Activated CD4-positive, alpha-beta memory T cell treated with anti-CD3 and anti-CD28 coated beads for 36 hours (primary cell): ENCODE measurements at regions of chr18 and their contacts with region 1.

Region 1: DNA sequence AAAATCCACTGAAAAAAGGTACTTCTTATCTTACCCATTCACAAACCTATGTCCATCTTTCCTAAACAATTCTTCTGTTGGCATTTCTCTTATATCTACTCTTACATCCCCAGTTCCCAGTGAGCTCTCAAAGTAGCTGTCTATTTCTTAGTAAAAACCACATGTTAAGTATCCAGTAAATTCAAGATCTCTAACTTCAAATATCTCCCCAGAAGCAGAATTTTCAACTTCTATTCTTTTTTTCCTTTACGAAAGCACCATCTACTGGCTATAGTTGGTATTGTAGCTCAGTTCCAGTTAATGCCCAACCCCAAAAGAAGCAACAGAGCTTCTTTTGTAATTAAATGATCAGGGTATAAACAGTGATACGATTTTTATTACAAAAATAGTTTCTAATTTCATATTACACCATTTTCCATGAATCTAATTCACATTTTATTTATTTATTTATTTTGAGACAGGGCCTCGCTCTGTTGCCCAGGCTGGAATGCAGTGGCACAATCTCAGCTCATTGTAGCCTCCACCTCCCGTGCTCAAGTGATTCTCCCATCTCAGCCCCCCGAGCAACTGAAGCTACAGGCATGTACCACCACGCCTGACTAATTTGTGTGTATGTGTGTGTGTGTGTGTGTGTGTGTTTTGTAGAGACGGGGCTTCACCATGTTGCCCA is 28.5 kb downstream of the HRH4 start:
- DNase-seq: no peak
- H3K4me3 Mint-ChIP-seq: no peak overlapping the region
- H3K27ac Mint-ChIP-seq: no peak overlapping the region
- H3K4me1 Mint-ChIP-seq: peaks cover 18% of the 10 kb centered on the region
- H3K27me3 Mint-ChIP-seq: peaks cover 13% of the 10 kb centered on the region

Region 2: GRCh38 chr18:24208270-24209035 is 280.5 kb before region 1 on chr18:
- CTCF ChIA-PET with region 1: no interaction called
- POLR2A ChIA-PET with region 1: no interaction called
- intact Hi-C with region 1: no loop called
- DNase-seq: no peak
- H3K4me3 Mint-ChIP-seq: no peak overlapping the region
- H3K27ac Mint-ChIP-seq: no peak overlapping the region
- H3K4me1 Mint-ChIP-seq: peaks cover 5% of the 10 kb centered on the region
- H3K27me3 Mint-ChIP-seq: peaks cover 8% of the 10 kb centered on the region

Region 3: GRCh38 chr18:24362758-24363157 is 126.2 kb before region 1 on chr18:
- CTCF ChIA-PET with region 1: interaction called, 441 read pairs
- POLR2A ChIA-PET with region 1: interaction called, 3 read pairs
- intact Hi-C with region 1: loop called (anchors 1 kb)
- DNase-seq: no peak
- H3K4me3 Mint-ChIP-seq: no peak overlapping the region
- H3K27ac Mint-ChIP-seq: no peak overlapping the region
- H3K4me1 Mint-ChIP-seq: no peaks in the 10 kb centered on the region
- H3K27me3 Mint-ChIP-seq: no peaks in the 10 kb centered on the region

Region 4: GRCh38 chr18:24426398-24427294 is 62.3 kb before region 1 on chr18 and contains the start of gene IMPACT:
- CTCF ChIA-PET with region 1: interaction called, 18 read pairs
- POLR2A ChIA-PET with region 1: no interaction called
- intact Hi-C with region 1: loop called (anchors 5 kb)
- DNase-seq: peak; percentile 81
- H3K4me3 Mint-ChIP-seq: peak within 1 kb of the TSS; percentile 88
- H3K27ac Mint-ChIP-seq: peak within 1 kb of the TSS; percentile 90
- H3K4me1 Mint-ChIP-seq: peaks cover 18% of the 10 kb centered on the region
- H3K27me3 Mint-ChIP-seq: peaks cover 10% of the 10 kb centered on the region
- total RNA-seq, gene IMPACT: 13.7 to 15.9 TPM

Region 5: GRCh38 chr18:24446953-24447538 is 41.9 kb before region 1 on chr18:
- CTCF ChIA-PET with region 1: interaction called, 22 read pairs
- POLR2A ChIA-PET with region 1: no interaction called
- intact Hi-C with region 1: loop called (anchors 5 kb)
- DNase-seq: no peak
- H3K4me3 Mint-ChIP-seq: no peak overlapping the region
- H3K27ac Mint-ChIP-seq: no peak overlapping the region
- H3K4me1 Mint-ChIP-seq: peaks cover 4% of the 10 kb centered on the region
- H3K27me3 Mint-ChIP-seq: no peaks in the 10 kb centered on the region

Region 6: GRCh38 chr18:24475926-24476589 is 12.9 kb before region 1 on chr18:
- CTCF ChIA-PET with region 1: interaction called, 16 read pairs
- POLR2A ChIA-PET with region 1: no interaction called
- intact Hi-C with region 1: no loop called
- DNase-seq: no peak
- H3K4me3 Mint-ChIP-seq: no peak overlapping the region
- H3K27ac Mint-ChIP-seq: no peak overlapping the region
- H3K4me1 Mint-ChIP-seq: peaks cover 8% of the 10 kb centered on the region
- H3K27me3 Mint-ChIP-seq: peaks cover 6% of the 10 kb centered on the region

Region 7: DNA sequence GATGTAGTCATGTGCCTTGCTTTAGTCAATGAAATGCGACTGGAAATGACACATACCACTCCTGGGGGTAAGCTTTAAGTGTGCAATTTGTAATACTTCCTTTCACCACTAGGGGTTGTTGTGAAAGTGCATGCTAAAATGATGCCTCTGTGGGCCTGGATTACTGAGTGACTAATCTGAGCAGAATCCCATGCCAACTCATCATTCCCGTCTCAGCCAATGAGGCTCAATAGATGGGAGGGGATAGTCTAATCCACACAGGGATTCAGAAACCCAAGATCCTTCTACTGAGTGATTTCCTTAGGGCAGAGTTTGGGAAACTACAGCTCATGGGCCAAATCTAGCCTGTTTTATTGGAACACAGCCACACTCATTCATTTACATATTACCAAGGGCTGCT is 25.5 kb after region 1 on chr18:
- CTCF ChIA-PET with region 1: interaction called, 30 read pairs
- POLR2A ChIA-PET with region 1: no interaction called
- intact Hi-C with region 1: no loop called
- DNase-seq: no peak
- H3K4me3 Mint-ChIP-seq: no peak overlapping the region
- H3K27ac Mint-ChIP-seq: no peak overlapping the region
- H3K4me1 Mint-ChIP-seq: no peaks in the 10 kb centered on the region
- H3K27me3 Mint-ChIP-seq: peaks cover 1% of the 10 kb centered on the region

Region 8: GRCh38 chr18:24894880-24895279 is 405.9 kb after region 1 on chr18:
- CTCF ChIA-PET with region 1: no interaction called
- POLR2A ChIA-PET with region 1: no interaction called
- intact Hi-C with region 1: no loop called
- DNase-seq: no peak
- H3K4me3 Mint-ChIP-seq: no peak overlapping the region
- H3K27ac Mint-ChIP-seq: no peak overlapping the region
- H3K4me1 Mint-ChIP-seq: no peaks in the 10 kb centered on the region
- H3K27me3 Mint-ChIP-seq: no peaks in the 10 kb centered on the region

Region 9: DNA sequence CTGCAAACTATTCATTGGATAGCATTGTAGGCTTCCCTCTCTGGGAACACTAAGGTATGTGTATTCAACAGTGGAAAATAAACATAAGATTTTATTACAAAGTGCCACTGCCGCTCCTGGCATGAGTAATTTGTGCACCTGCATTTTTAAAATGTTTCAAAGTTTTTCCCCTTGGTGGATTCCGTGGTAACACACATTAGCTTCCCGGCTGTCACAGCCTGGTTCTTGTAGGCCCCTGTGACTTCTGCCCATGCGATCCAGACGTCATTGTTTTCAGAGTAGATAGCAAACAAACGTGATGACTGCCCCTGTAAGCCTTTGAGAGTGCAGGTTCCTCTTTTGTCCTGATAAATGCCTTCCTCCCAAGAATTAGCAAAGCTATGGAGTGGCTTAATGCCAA is 442.0 kb after region 1 on chr18:
- CTCF ChIA-PET with region 1: no interaction called
- POLR2A ChIA-PET with region 1: no interaction called
- intact Hi-C with region 1: no loop called
- DNase-seq: no peak
- H3K4me3 Mint-ChIP-seq: no peak overlapping the region
- H3K27ac Mint-ChIP-seq: no peak overlapping the region
- H3K4me1 Mint-ChIP-seq: no peaks in the 10 kb centered on the region
- H3K27me3 Mint-ChIP-seq: no peaks in the 10 kb centered on the region